Calu3 (cell line): ENCODE measurements at regions of chr22 and their contacts with region 1.

Region 1: DNA sequence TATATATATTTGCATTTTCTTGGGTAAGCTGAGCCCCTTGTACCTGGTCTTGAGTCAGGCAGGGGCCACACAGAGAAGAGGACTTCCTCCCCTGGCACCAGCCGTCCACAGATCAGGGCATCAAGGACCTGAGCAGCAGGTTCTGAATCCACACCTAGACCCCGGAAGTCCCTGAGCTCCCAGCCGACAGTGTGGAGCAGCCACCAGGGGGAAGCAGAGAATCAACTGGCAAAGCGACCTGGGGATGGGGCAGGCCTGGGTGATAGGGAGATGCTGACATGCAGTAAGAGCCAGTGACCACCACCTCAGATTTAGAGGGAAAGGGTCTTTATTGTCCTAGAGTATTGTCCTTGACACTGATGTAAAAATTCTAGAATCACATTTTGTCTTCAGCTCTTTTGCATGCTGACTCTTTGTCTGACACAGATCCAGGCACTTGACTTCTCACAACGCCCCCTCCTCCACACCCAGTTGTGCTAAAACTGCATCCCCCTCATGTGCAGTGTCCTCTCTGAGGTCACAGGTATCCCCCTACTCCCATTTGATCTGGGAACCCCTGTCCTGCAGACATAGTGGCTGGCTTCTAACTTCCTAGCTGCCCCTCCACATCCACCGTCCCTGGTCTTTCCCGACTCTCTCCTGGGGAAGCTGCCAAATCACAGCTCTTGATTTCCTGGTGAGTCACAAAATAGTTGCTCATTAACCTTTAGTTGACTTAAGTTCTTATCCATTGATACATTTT is 109.3 kb downstream of the GGTLC2 start:
- DNase-seq: peak; percentile 91
- H3K4me3 Mint-ChIP-seq: no peak overlapping the region
- H3K27ac Mint-ChIP-seq: peak overlapping the region; percentile 53
- H3K4me1 Mint-ChIP-seq: peaks cover 19% of the 10 kb centered on the region
- H3K27me3 Mint-ChIP-seq: peaks cover 13% of the 10 kb centered on the region
- CTCF ChIP-seq: peak; percentile 76

Region 2: DNA sequence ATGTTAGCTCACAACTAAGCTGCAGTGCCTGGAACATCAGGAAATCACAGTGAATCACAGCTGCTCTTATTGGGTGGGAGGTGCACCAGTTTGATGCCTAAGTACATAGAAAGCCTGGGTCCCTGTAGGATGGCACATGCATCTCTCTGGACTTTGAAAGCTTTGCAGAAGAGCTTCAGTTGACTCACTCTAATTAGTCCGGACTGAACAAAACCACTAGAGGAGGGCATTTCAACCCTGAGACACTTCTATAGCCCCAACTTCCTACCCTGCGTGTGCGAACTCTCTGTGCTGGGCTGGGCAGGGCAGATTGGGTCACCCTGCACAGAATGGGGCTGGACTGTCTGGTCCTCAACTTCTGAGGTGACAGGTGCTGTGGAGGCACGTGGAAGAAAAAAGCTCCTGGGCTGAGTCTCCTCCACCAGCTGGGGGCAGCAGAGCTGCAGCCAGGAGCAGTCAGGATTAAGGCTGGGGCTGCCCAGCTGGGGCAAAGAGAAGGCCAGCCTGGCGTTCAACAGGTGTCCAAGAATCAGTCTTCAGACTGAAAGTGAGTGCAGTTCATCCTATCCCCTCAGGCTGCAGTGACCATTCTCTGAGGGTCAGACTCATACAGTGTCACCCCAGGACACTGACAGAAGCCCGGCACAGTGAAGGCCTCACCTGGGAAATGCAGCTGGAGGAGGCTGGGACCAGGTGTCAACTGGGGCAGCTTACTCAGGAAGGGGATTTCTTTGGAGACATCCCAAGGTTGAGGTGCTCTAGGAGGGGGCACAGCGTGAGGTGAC is 87.2 kb before region 1 on chr22:
- CTCF ChIA-PET with region 1: interaction called, 12 read pairs
- intact Hi-C with region 1: no loop called
- DNase-seq: peak; percentile 72
- H3K4me3 Mint-ChIP-seq: no peak overlapping the region
- H3K27ac Mint-ChIP-seq: no peak overlapping the region
- H3K4me1 Mint-ChIP-seq: no peaks in the 10 kb centered on the region
- H3K27me3 Mint-ChIP-seq: peaks cover 77% of the 10 kb centered on the region
- CTCF ChIP-seq: peak; percentile 72

Region 3: GRCh38 chr22:22692707-22693530 is 60.8 kb before region 1 on chr22:
- CTCF ChIA-PET with region 1: interaction called, 18 read pairs
- intact Hi-C with region 1: loop called (anchors 1 kb)
- DNase-seq: peak; percentile 97
- H3K4me3 Mint-ChIP-seq: peak overlapping the region; percentile 56
- H3K27ac Mint-ChIP-seq: peak overlapping the region; percentile 85
- H3K4me1 Mint-ChIP-seq: peaks cover 49% of the 10 kb centered on the region
- H3K27me3 Mint-ChIP-seq: no peaks in the 10 kb centered on the region
- CTCF ChIP-seq: peak; percentile 96

Region 4: DNA sequence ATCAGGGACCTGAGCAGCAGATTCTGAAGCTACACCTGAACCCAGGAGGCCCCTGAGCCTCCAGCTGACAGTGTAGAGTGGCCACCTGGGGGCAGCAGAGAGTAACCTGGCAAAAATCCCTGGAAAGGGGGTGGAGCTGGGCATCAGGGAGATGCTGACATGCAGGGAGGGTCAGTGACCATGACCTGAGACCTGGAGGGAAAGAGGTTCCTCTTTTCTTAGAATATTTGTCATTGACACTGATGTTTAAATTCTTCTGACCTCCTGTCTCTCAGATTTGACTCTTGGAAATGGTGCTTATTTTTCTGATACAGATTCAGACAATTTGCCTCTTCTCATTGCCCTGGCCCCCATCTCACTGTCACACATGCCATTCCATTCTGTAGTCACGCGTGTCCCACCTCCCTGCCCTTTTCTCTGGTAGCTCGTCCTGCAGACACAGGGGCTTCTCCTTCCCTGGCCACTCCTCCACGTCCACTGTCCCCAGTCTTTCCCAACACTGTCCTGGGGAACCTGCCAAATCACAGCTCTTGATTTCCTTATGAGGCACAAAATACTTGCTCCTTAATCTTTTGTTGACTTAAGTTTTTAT is 16.7 kb after region 1 on chr22:
- CTCF ChIA-PET with region 1: interaction called, 27 read pairs
- intact Hi-C with region 1: no loop called
- DNase-seq: peak; percentile 84
- H3K4me3 Mint-ChIP-seq: no peak overlapping the region
- H3K27ac Mint-ChIP-seq: no peak overlapping the region
- H3K4me1 Mint-ChIP-seq: no peaks in the 10 kb centered on the region
- H3K27me3 Mint-ChIP-seq: peaks cover 97% of the 10 kb centered on the region
- CTCF ChIP-seq: peak; percentile 84

Region 5: GRCh38 chr22:22877523-22878210 is 124.0 kb after region 1 on chr22:
- CTCF ChIA-PET with region 1: interaction called, 22 read pairs
- intact Hi-C with region 1: no loop called
- DNase-seq: peak; percentile 79
- H3K4me3 Mint-ChIP-seq: no peak overlapping the region
- H3K27ac Mint-ChIP-seq: no peak overlapping the region
- H3K4me1 Mint-ChIP-seq: no peaks in the 10 kb centered on the region
- H3K27me3 Mint-ChIP-seq: peaks cover 68% of the 10 kb centered on the region
- CTCF ChIP-seq: peak; percentile 81

Region 6: GRCh38 chr22:22903355-22903777 is 149.7 kb after region 1 on chr22:
- CTCF ChIA-PET with region 1: no interaction called
- intact Hi-C with region 1: no loop called
- DNase-seq: no peak
- H3K4me3 Mint-ChIP-seq: no peak overlapping the region
- H3K27ac Mint-ChIP-seq: no peak overlapping the region
- H3K4me1 Mint-ChIP-seq: no peaks in the 10 kb centered on the region
- H3K27me3 Mint-ChIP-seq: peaks cover 88% of the 10 kb centered on the region
- CTCF ChIP-seq: no peak